CD8-positive, alpha-beta memory T cell (primary cell): ENCODE measurements at regions of chr5 and their contacts with region 1.

Region 1: DNA sequence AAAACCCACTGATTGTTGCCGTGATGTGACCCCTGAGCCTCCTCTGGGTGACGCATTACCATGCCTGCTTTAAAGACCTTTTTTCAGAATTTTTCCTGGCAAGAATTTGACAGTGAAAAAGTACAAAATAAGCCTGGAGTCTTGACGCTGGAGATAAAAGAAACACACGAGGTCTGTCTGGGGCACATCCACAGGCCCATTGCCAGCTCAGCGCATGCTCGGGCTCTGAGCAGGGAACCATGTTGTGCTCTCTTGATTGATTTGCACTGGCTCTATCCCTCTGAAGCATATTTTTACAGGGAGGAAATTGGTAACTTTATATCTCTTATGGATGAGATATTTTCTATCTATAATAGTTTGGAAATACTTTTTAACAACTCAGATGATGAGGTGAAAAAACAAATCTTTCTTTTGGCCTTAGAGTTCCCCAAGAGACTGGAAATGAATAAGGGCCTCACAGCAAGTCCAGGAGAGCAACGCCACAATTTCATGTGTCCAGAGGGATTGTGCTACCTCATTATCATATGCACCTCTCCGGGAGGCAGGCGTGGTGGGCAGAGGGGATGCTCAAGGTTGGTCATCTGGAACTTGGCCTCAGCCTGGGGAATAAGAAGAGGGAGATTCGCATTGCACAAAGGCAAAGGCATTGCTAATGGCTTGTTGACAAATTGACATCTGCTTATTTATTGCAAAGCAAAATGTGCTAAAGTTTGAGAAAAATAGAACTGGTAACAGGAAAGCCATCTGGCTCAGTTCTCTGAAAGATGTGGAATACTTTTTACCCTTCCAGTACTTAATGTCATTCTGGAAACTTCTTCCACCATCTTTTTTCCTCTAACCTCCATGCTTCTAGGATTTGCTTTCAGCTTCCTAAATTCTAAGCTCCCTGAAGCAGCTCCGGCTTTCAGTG is 183.8 kb downstream of the PJA2 start:
- DNase-seq: no peak
- H3K4me3 ChIP-seq: no peak overlapping the region
- H3K4me3 Mint-ChIP-seq: no peak overlapping the region
- H3K27ac ChIP-seq: no peak overlapping the region
- H3K27ac Mint-ChIP-seq: peak overlapping the region in 1 of 8 donors; percentile 47
- H3K4me1 ChIP-seq: no peaks in the 10 kb centered on the region
- H3K4me1 Mint-ChIP-seq: no peaks in the 10 kb centered on the region
- H3K27me3 ChIP-seq: no peaks in the 10 kb centered on the region
- H3K27me3 Mint-ChIP-seq: peaks cover 3 to 9% of the 10 kb centered on the region in 2 donors

Region 2: GRCh38 chr5:109196486-109197160 is 29.3 kb before region 1 on chr5:
- CTCF ChIA-PET with region 1: no interaction called
- POLR2A ChIA-PET with region 1: interaction called, 10 read pairs
- DNase-seq: no peak
- H3K4me3 ChIP-seq: no peak overlapping the region
- H3K4me3 Mint-ChIP-seq: no peak overlapping the region
- H3K27ac ChIP-seq: no peak overlapping the region
- H3K27ac Mint-ChIP-seq: no peak overlapping the region
- H3K4me1 ChIP-seq: no peaks in the 10 kb centered on the region
- H3K4me1 Mint-ChIP-seq: no peaks in the 10 kb centered on the region
- H3K27me3 ChIP-seq: no peaks in the 10 kb centered on the region
- H3K27me3 Mint-ChIP-seq: peaks cover 0 to 1% of the 10 kb centered on the region in 2 donors